ENCODE measurements at regions of chr9 and their contacts with region 1.

Region 1: GRCh38 chr9:135085830-135086546 is 1.5 kb upstream of the OLFM1 start:
- DNase-seq: peak; percentile 93
- H3K4me3 ChIP-seq: peak overlapping the region; percentile 6 to 47
- H3K27ac ChIP-seq: no peak overlapping the region
- H3K4me1 ChIP-seq: peaks cover 21% of the 10 kb centered on the region
- H3K27me3 ChIP-seq: no peaks in the 10 kb centered on the region
- CTCF ChIP-seq: peak; percentile 87 to 97 (median 89)
- POLR2A ChIP-seq: no peak

Region 2: DNA sequence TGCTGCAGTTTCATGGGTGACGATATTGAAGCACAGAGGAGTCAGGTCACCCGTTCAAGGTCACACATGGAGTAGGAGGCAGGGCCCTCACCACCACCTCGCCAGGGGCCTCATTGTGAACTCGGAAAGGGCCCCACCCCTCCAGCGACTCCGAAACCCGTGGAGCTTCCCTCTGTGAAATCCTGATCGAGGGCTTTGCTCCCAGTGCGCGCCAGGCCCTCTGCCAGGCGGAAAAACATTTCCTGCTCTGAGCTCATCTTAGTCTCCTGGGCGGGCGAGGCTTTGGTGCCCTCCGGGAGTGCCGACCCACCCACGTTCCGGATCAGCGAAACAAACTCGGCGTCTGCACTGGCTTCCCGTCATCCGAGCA is 93.2 kb before region 1 on chr9:
- intact Hi-C with region 1: no loop called
- DNase-seq: no peak
- H3K4me3 ChIP-seq: peak overlapping the region; percentile 15 to 38
- H3K27ac ChIP-seq: no peak overlapping the region
- H3K4me1 ChIP-seq: no peaks in the 10 kb centered on the region
- H3K27me3 ChIP-seq: no peaks in the 10 kb centered on the region
- CTCF ChIP-seq: no peak
- POLR2A ChIP-seq: no peak

Region 3: GRCh38 chr9:135343837-135344522 is 258.0 kb after region 1 on chr9:
- intact Hi-C with region 1: loop called (anchors 5 kb)
- DNase-seq: peak; percentile 67
- H3K4me3 ChIP-seq: no peak overlapping the region
- H3K27ac ChIP-seq: no peak overlapping the region
- H3K4me1 ChIP-seq: no peaks in the 10 kb centered on the region
- H3K27me3 ChIP-seq: no peaks in the 10 kb centered on the region
- CTCF ChIP-seq: peak; percentile 77 to 85 (median 81)
- POLR2A ChIP-seq: no peak

Region 4: GRCh38 chr9:135410831-135411473 is 325.0 kb after region 1 on chr9:
- intact Hi-C with region 1: loop called (anchors 5 kb)
- DNase-seq: no peak
- H3K4me3 ChIP-seq: no peak overlapping the region
- H3K27ac ChIP-seq: no peak overlapping the region
- H3K4me1 ChIP-seq: peaks cover 6% of the 10 kb centered on the region
- H3K27me3 ChIP-seq: no peaks in the 10 kb centered on the region
- CTCF ChIP-seq: no peak
- POLR2A ChIP-seq: no peak

Region 5: GRCh38 chr9:135796784-135797485 is 710.9 kb after region 1 on chr9:
- intact Hi-C with region 1: no loop called
- DNase-seq: no peak
- H3K4me3 ChIP-seq: no peak overlapping the region
- H3K27ac ChIP-seq: no peak overlapping the region
- H3K4me1 ChIP-seq: peaks cover 3% of the 10 kb centered on the region
- H3K27me3 ChIP-seq: no peaks in the 10 kb centered on the region
- CTCF ChIP-seq: no peak
- POLR2A ChIP-seq: no peak

Measured in testis (tissue), 5 donors.